GM12878 (cell line): ENCODE measurements at regions of chr6 and their contacts with region 1.

Region 1: DNA sequence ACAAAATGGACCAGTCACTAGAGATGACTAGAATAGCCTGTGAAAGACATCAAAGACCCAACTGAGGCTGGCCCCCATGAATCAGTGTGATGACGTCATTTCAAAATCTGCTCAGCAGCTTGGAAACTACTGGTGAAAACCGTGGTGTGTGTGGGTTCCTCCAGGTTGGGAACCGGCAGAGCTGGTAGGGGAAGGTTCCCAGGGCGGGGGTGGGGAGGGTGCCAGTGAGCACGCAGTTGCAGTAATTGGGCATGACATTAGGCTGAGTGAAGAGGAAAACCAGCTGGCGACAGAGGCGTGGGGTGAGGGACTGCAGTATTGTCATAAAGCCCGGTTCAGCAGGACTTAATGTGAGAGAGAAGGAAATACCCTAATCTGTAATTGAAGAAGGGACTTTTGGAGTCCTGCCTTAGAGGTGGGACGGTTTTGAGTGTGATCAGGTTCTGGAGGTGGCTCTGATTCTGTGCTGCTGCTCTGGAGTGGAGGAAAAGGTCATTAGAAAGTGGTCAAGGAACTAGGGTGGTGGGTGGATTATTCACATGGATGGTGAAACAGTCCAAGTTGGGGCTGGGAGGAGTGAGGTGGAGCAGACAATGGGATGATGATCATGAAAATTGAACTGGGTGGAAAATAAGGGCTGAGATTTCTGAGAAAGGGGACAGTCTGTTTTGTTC is 52.0 kb upstream of the MTHFD1L start:
- DNase-seq: peak; percentile 78
- ATAC-seq: peak; percentile 81
- H3K4me3 ChIP-seq: no peak overlapping the region
- H3K27ac ChIP-seq: peak overlapping the region; percentile 79
- H3K4me1 ChIP-seq: peaks cover 19% of the 10 kb centered on the region
- H3K27me3 ChIP-seq: no peaks in the 10 kb centered on the region
- CTCF ChIP-seq: no peak
- EP300 ChIP-seq: peak in 1 of 2 experiments; percentile 16; a peak in 1 of 4 replicates
- POLR2A ChIP-seq: no peak
- RAD21 ChIP-seq: 0 out of 2 replicates have a peak, but pooled peaks have one; percentile 9

Region 2: GRCh38 chr6:149934249-149935156 is 879.0 kb before region 1 on chr6:
- CTCF ChIA-PET with region 1: no interaction called
- POLR2A ChIA-PET with region 1: no interaction called
- RAD21 ChIA-PET with region 1: no interaction called
- SMC1A ChIA-PET with region 1: no interaction called
- in situ Hi-C with region 1: loop called (anchors 10 kb)
- intact Hi-C with region 1: loop called (anchors 10 kb)
- DNase-seq: peak; percentile 34
- ATAC-seq: peak; percentile 34
- H3K4me3 ChIP-seq: no peak overlapping the region
- H3K27ac ChIP-seq: no peak overlapping the region
- H3K4me1 ChIP-seq: peaks cover 14% of the 10 kb centered on the region
- H3K27me3 ChIP-seq: peaks cover 4 to 8% of the 10 kb centered on the region in 2 experiments
- CTCF ChIP-seq: peak; percentile 61 to 78 (median 77)
- EP300 ChIP-seq: no peak
- POLR2A ChIP-seq: no peak
- RAD21 ChIP-seq: peak; percentile 86

Region 3: GRCh38 chr6:150099546-150099945 is 713.9 kb before region 1 on chr6:
- CTCF ChIA-PET with region 1: no interaction called
- POLR2A ChIA-PET with region 1: no interaction called
- RAD21 ChIA-PET with region 1: no interaction called
- SMC1A ChIA-PET with region 1: no interaction called
- in situ Hi-C with region 1: no loop called
- intact Hi-C with region 1: no loop called
- DNase-seq: no peak
- ATAC-seq: no peak
- H3K4me3 ChIP-seq: no peak overlapping the region
- H3K27ac ChIP-seq: no peak overlapping the region
- H3K4me1 ChIP-seq: no peaks in the 10 kb centered on the region
- H3K27me3 ChIP-seq: peaks cover 0 to 4% of the 10 kb centered on the region in 2 experiments; a peak in 3 of 4 replicates
- CTCF ChIP-seq: no peak
- EP300 ChIP-seq: no peak
- POLR2A ChIP-seq: no peak
- RAD21 ChIP-seq: no peak

Region 4: DNA sequence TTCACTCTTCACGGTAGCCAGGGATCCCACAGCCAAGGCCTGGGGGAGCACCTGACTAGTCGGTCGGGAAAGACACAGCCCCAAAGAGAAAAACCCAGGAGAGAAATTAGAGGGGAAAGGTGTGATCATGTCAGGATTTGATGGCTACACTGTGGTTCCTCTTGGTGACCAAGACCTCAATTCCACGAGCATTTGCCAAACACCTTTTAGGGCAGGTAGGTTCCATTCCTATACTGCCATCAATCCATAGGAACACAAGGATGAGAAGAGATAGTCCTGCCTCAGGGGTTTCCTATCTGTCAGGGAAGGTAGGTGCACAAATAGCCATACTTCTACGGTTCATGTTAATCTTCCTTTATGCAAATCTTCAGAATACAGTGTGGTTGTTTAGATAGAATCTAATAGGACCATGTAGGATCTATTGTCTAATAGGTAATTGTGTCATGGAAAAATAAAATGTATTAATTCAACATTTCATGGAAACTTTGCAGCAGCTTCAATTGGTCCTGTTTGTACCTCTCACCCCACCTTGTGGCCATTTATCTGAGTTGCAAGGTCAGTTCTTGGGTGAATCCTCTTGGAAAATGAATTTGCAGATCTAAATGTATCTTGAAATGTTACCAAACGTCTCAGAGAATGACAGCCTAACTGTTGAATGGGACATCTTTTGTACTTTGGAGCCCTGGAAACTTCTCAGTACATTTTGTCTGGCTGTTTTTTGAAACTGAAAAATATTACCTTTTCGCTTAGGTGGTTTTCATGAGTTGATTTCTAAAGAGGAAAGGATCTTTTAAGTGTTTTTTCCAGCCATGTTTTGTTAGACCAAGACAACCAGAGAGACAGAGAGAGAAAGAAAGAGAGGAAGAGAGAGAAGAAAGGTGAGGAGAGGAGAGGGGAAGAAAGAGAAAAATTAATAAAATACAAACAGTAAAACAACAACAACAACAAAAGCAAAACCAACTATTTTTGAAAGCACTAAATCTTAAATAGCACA is 478.4 kb before region 1 on chr6:
- CTCF ChIA-PET with region 1: interaction called, 11 read pairs
- POLR2A ChIA-PET with region 1: no interaction called
- RAD21 ChIA-PET with region 1: interaction called, 3 read pairs
- SMC1A ChIA-PET with region 1: interaction called, 3 read pairs
- in situ Hi-C with region 1: loop called (anchors 10 kb)
- intact Hi-C with region 1: loop called (anchors 5 kb)
- DNase-seq: no peak
- ATAC-seq: peak; percentile 43; the same call in 2 of the 3 replicates
- H3K4me3 ChIP-seq: no peak overlapping the region
- H3K27ac ChIP-seq: no peak overlapping the region
- H3K4me1 ChIP-seq: no peaks in the 10 kb centered on the region
- H3K27me3 ChIP-seq: no peaks in the 10 kb centered on the region
- CTCF ChIP-seq: peak; percentile 59 to 70 (median 68); a peak in 5 of 6 replicates
- EP300 ChIP-seq: no peak
- POLR2A ChIP-seq: no peak
- RAD21 ChIP-seq: peak; percentile 87

Region 5: GRCh38 chr6:150417899-150418826 is 395.3 kb before region 1 on chr6:
- CTCF ChIA-PET with region 1: interaction called, 217 read pairs
- POLR2A ChIA-PET with region 1: no interaction called
- RAD21 ChIA-PET with region 1: interaction called, 130 read pairs
- SMC1A ChIA-PET with region 1: interaction called, 142 read pairs
- in situ Hi-C with region 1: loop called (anchors 5 kb)
- intact Hi-C with region 1: loop called (anchors 1 kb)
- DNase-seq: peak; percentile 40
- ATAC-seq: peak; percentile 95
- H3K4me3 ChIP-seq: peak overlapping the region; percentile 57; the same call in 1 of the 2 replicates
- H3K27ac ChIP-seq: no peak overlapping the region
- H3K4me1 ChIP-seq: no peaks in the 10 kb centered on the region
- H3K27me3 ChIP-seq: no peaks in the 10 kb centered on the region; a peak in 1 of 4 replicates
- CTCF ChIP-seq: peak; percentile 77 to 88 (median 80)
- EP300 ChIP-seq: no peak
- POLR2A ChIP-seq: no peak
- RAD21 ChIP-seq: peak; percentile 90

Region 6: GRCh38 chr6:150685860-150686259 is 127.6 kb before region 1 on chr6:
- CTCF ChIA-PET with region 1: interaction called, 52 read pairs
- POLR2A ChIA-PET with region 1: no interaction called
- RAD21 ChIA-PET with region 1: interaction called, 52 read pairs
- SMC1A ChIA-PET with region 1: interaction called, 35 read pairs
- in situ Hi-C with region 1: no loop called
- intact Hi-C with region 1: loop called (anchors 2 kb)
- DNase-seq: peak; percentile 11
- ATAC-seq: peak; percentile 82
- H3K4me3 ChIP-seq: no peak overlapping the region
- H3K27ac ChIP-seq: no peak overlapping the region
- H3K4me1 ChIP-seq: peaks cover 10% of the 10 kb centered on the region
- H3K27me3 ChIP-seq: no peaks in the 10 kb centered on the region; a peak in 1 of 4 replicates
- CTCF ChIP-seq: peak; percentile 71 to 85 (median 80)
- EP300 ChIP-seq: no peak
- POLR2A ChIP-seq: no peak
- RAD21 ChIP-seq: peak; percentile 77

Region 7: GRCh38 chr6:150765067-150765764 is 48.2 kb before region 1 on chr6:
- CTCF ChIA-PET with region 1: interaction called, 8 read pairs
- POLR2A ChIA-PET with region 1: no interaction called
- RAD21 ChIA-PET with region 1: interaction called, 13 read pairs
- SMC1A ChIA-PET with region 1: interaction called, 5 read pairs
- in situ Hi-C with region 1: no loop called
- intact Hi-C with region 1: no loop called
- DNase-seq: peak; percentile 33
- ATAC-seq: peak; percentile 95
- H3K4me3 ChIP-seq: peak overlapping the region; percentile 54; the same call in 1 of the 2 replicates
- H3K27ac ChIP-seq: peak overlapping the region; percentile 28
- H3K4me1 ChIP-seq: peaks cover 19% of the 10 kb centered on the region
- H3K27me3 ChIP-seq: no peaks in the 10 kb centered on the region
- CTCF ChIP-seq: no peak
- EP300 ChIP-seq: no peak
- POLR2A ChIP-seq: no peak
- RAD21 ChIP-seq: no peak

Region 8: DNA sequence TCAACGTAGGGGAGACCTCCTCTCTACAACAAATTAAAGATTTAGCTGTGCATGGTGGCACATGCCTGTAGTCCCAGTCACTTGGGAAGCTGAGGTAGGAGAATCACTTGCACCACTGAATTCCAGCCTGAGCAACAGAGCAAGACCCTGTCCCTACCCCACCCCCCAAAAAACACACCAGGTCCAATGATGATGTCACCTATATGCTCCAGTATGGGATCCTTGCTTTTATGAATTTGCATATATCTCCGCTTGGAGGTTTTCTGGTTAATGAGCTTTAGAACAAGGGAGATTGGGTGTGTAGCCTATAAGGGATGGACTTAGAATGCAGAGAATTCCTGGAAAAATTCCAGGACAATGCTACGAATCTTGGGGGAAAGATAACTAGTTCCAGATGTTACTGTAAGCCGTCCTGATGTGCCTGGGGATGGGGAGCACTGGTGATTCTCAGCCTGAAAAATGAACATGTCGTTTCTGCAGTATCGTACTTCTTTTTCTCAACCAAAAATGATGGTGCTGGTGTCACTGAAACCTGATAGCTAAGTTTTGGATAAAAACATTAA is 516.8 kb after region 1 on chr6:
- CTCF ChIA-PET with region 1: interaction called, 65 read pairs
- POLR2A ChIA-PET with region 1: no interaction called
- RAD21 ChIA-PET with region 1: interaction called, 22 read pairs
- SMC1A ChIA-PET with region 1: interaction called, 11 read pairs
- in situ Hi-C with region 1: no loop called
- intact Hi-C with region 1: no loop called
- DNase-seq: no peak
- ATAC-seq: no peak
- H3K4me3 ChIP-seq: no peak overlapping the region
- H3K27ac ChIP-seq: no peak overlapping the region
- H3K4me1 ChIP-seq: no peaks in the 10 kb centered on the region
- H3K27me3 ChIP-seq: peaks cover 0 to 4% of the 10 kb centered on the region in 2 experiments; a peak in 2 of 4 replicates
- CTCF ChIP-seq: no peak
- EP300 ChIP-seq: no peak
- POLR2A ChIP-seq: no peak
- RAD21 ChIP-seq: no peak